Naive thymus-derived CD4-positive, alpha-beta T cell (primary cell): ENCODE measurements at regions of chr10 and their contacts with region 1.

Region 1: GRCh38 chr10:110497438-110498086 is at the start of gene DUSP5:
- DNase-seq: peak; percentile 91 to 99 (median 96)
- ATAC-seq: peak; percentile 96
- H3K4me3 ChIP-seq: peak within 1 kb of the TSS; percentile 77
- H3K4me3 Mint-ChIP-seq: peak within 1 kb of the TSS; percentile 89 to 97 (median 92)
- H3K27ac ChIP-seq: peak within 1 kb of the TSS; percentile 71
- H3K27ac Mint-ChIP-seq: peak within 1 kb of the TSS; percentile 83 to 94 (median 91)
- H3K4me1 ChIP-seq: peaks cover 32 to 43% of the 10 kb centered on the region in 2 donors
- H3K4me1 Mint-ChIP-seq: peaks cover 43 to 57% (median 50%) of the 10 kb centered on the region in 7 donors
- H3K27me3 ChIP-seq: no peaks in the 10 kb centered on the region
- H3K27me3 Mint-ChIP-seq: peaks cover 0 to 3% (median 0%) of the 10 kb centered on the region in 5 donors
- total RNA-seq, gene DUSP5: 0.38 to 57.2 (median 35.7) TPM

Region 2: GRCh38 chr10:109914966-109915365 is 582.6 kb before region 1 on chr10:
- CTCF ChIA-PET with region 1: no interaction called
- POLR2A ChIA-PET with region 1: no interaction called
- intact Hi-C with region 1: loop called (anchors 5 kb)
- DNase-seq: peak in 7 of 9 donors; percentile 37 to 71 (median 56)
- ATAC-seq: peak; percentile 93
- H3K4me3 ChIP-seq: no peak overlapping the region
- H3K4me3 Mint-ChIP-seq: peak overlapping the region; percentile 56 to 78 (median 68)
- H3K27ac ChIP-seq: no peak overlapping the region
- H3K27ac Mint-ChIP-seq: peak overlapping the region in 8 of 9 donors; percentile 40 to 88 (median 58)
- H3K4me1 ChIP-seq: peaks cover 32 to 60% of the 10 kb centered on the region in 2 donors
- H3K4me1 Mint-ChIP-seq: peaks cover 64 to 94% (median 87%) of the 10 kb centered on the region in 7 donors
- H3K27me3 ChIP-seq: no peaks in the 10 kb centered on the region
- H3K27me3 Mint-ChIP-seq: no peaks in the 10 kb centered on the region

Region 3: GRCh38 chr10:110137142-110137545 is 360.4 kb before region 1 on chr10:
- CTCF ChIA-PET with region 1: interaction called, 5 read pairs
- POLR2A ChIA-PET with region 1: no interaction called
- intact Hi-C with region 1: loop called in 1 of 2 experiments (anchors 5 kb)
- DNase-seq: peak in 7 of 9 donors; percentile 48 to 67 (median 64)
- ATAC-seq: peak; percentile 85
- H3K4me3 ChIP-seq: no peak overlapping the region
- H3K4me3 Mint-ChIP-seq: peak overlapping the region in 1 of 10 donors; percentile 19
- H3K27ac ChIP-seq: peak overlapping the region; percentile 4
- H3K27ac Mint-ChIP-seq: peak overlapping the region; percentile 2 to 83 (median 45)
- H3K4me1 ChIP-seq: peaks cover 14% of the 10 kb centered on the region in 2 donors
- H3K4me1 Mint-ChIP-seq: peaks cover 13 to 38% (median 29%) of the 10 kb centered on the region in 7 donors
- H3K27me3 ChIP-seq: no peaks in the 10 kb centered on the region
- H3K27me3 Mint-ChIP-seq: no peaks in the 10 kb centered on the region

Region 4: DNA sequence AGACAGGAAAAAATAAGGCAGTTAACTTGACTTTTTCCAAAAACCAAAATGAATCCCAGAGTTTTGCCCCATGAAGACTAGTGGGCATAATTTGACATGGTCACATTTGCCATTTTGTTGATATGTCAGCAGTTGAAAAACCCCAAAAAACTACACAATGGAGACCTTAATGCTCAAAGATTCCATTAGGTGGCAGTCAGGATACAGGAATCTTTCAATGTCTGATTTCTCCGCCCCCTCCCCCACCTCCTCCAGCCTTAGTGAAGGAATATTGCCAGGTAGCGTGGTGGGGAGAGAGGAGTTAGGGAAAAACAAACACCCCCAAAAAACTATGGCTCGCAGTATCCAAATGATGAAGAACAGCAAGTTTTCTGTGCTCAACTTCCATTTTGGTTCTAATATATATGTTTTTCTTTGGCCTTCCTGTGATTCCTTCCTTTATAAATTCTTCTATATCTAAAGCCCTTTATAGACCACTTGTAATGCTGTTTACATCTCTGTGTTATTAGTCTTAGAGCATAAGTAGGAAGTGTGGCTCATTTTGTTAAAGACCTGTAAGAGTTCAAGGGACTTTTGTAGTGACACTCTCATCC is 186.1 kb before region 1 on chr10:
- CTCF ChIA-PET with region 1: interaction called, 4 read pairs
- POLR2A ChIA-PET with region 1: interaction called, 21 read pairs
- intact Hi-C with region 1: loop called (anchors 1 kb)
- DNase-seq: peak in 6 of 9 donors; percentile 19 to 44 (median 28)
- ATAC-seq: peak; percentile 81
- H3K4me3 ChIP-seq: no peak overlapping the region
- H3K4me3 Mint-ChIP-seq: no peak overlapping the region
- H3K27ac ChIP-seq: no peak overlapping the region
- H3K27ac Mint-ChIP-seq: no peak overlapping the region
- H3K4me1 ChIP-seq: peaks cover 0 to 4% of the 10 kb centered on the region in 2 donors
- H3K4me1 Mint-ChIP-seq: peaks cover 0 to 27% (median under 1%) of the 10 kb centered on the region in 7 donors
- H3K27me3 ChIP-seq: no peaks in the 10 kb centered on the region
- H3K27me3 Mint-ChIP-seq: peaks cover 0 to 4% (median 0%) of the 10 kb centered on the region in 5 donors

Region 5: DNA sequence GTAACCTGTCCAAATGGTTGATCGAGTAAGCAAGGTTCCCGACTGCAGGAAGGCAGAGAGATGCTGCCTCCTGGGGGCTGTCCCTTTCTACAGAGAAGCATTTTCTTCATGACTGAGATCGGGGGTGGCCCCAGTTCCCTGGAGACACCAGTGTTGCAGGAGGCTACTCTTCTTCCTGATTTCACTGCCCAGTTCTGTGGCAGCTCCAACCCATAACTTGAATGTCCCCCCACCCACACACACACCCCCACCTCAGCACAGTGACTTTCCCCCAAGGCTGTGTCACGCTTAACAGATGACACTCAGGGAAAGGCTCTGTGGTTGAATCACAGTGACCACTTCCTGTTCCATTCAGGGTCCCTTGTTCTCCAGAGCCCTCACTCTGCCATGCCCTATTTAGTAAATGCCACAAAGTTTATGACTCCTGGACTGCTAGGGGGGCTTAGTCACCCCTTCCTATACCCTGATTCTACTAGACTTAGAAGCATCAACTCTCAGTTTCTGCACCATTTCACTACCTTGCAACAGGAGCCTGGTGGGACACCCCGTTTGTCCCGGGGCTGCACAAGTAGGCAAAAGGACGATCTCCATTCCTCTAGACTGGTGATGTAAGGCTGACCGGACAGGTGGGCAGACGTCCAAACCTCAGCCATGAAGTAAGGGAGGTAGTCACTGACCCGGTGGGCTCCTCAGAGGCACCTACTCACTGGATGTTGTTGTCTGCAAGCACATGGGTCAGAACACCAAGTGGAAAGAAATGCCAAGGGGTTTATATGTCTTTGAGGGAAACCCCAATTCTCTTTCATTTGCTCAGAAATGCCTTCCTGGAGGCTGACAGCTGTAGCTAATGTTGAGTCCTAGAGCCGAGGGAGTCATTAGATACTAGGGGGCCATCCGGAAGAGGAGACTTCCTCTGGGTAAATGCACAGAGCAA is 38.7 kb after region 1 on chr10:
- CTCF ChIA-PET with region 1: no interaction called
- POLR2A ChIA-PET with region 1: no interaction called
- intact Hi-C with region 1: loop called in 1 of 2 experiments (anchors 2 kb)
- DNase-seq: peak in 6 of 9 donors; percentile 10 to 70 (median 21)
- ATAC-seq: peak; percentile 94
- H3K4me3 ChIP-seq: no peak overlapping the region
- H3K4me3 Mint-ChIP-seq: peak overlapping the region in 2 of 10 donors; percentile 71 to 73
- H3K27ac ChIP-seq: no peak overlapping the region
- H3K27ac Mint-ChIP-seq: peak overlapping the region in 2 of 9 donors; percentile 48 to 74
- H3K4me1 ChIP-seq: peaks cover 7 to 9% of the 10 kb centered on the region in 2 donors
- H3K4me1 Mint-ChIP-seq: peaks cover 15 to 50% (median 17%) of the 10 kb centered on the region in 7 donors
- H3K27me3 ChIP-seq: no peaks in the 10 kb centered on the region
- H3K27me3 Mint-ChIP-seq: peaks cover 0 to 8% (median 0%) of the 10 kb centered on the region in 5 donors

Region 6: DNA sequence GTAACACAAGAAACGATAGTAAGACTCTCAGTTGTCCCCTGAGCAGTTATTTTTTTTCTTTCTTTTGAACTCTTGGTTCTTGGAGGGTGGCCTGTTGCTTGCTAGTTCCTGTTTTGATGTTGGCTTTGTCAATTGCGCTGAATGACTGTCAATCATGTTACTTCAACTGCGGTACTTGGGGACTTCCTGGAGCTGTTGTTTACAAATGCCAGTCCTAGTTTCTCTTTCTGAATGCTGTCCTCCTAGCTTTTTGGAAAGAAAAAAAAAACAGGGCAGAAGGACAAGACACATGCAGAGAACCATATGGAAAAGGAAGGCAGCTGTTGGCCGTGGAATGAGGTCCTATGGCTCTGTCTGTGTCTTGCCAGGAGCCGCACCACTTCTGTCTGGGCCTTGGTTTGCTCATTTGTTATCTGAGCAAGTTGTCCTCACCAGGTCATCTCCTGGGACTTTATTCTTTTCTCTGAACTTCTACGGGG is 367.1 kb after region 1 on chr10:
- CTCF ChIA-PET with region 1: no interaction called
- POLR2A ChIA-PET with region 1: no interaction called
- intact Hi-C with region 1: loop called (anchors 5 to 10 kb)
- DNase-seq: peak in 7 of 9 donors; percentile 73 to 92 (median 88)
- ATAC-seq: peak; percentile 81
- H3K4me3 ChIP-seq: peak overlapping the region; percentile 46
- H3K4me3 Mint-ChIP-seq: peak overlapping the region; percentile 72 to 88 (median 80)
- H3K27ac ChIP-seq: peak overlapping the region; percentile 100
- H3K27ac Mint-ChIP-seq: peak overlapping the region; percentile 92 to 100 (median 99)
- H3K4me1 ChIP-seq: peaks cover 97 to 98% of the 10 kb centered on the region in 2 donors
- H3K4me1 Mint-ChIP-seq: peaks cover 81 to 100% (median 98%) of the 10 kb centered on the region in 7 donors
- H3K27me3 ChIP-seq: no peaks in the 10 kb centered on the region
- H3K27me3 Mint-ChIP-seq: no peaks in the 10 kb centered on the region